Heart left ventricle (tissue), 16 donors: ENCODE measurements at regions of chr5 and their contacts with region 1.

Region 1: DNA sequence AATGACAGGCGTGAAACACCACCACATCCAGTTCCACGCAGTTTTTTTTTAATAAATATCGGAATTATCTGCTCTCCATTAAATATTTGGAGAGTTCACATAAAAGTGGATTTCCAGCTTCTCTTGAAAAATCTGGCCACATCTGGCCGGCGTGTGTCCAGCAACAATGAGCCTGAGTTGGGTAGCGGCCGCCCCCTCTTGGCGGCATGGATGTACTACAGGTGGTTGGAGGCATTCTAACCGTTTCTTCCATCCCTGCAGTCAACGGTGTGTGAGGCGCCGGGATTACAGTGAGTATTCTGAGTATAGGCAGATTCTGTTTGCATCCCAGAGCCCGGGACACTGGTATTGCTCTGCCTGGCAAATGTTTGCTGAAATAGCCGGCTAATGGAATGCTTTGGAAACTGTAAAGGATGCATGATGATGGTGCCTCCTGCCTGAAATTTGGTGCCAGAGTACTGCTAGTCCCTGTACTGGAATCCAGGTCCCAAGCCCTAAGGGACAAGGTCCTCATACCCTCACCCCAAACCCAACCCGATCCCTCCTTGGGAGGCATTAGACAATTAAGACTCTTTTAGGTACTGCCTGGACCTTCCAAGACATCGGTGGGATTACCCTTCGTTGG is 13.6 kb upstream of the GM2A start:
- DNase-seq: peak; percentile 82 to 91 (median 86)
- ATAC-seq: peak; percentile 46 to 74 (median 62)
- H3K4me3 ChIP-seq: peak overlapping the region in 10 of 12 donors; percentile 19 to 46 (median 30)
- H3K27ac ChIP-seq: peak overlapping the region; percentile 72 to 90 (median 86)
- H3K4me1 ChIP-seq: peaks cover 3 to 43% (median 23%) of the 10 kb centered on the region in 12 donors
- H3K27me3 ChIP-seq: no peaks in the 10 kb centered on the region
- CTCF ChIP-seq: peak; percentile 67 to 96 (median 94)
- POLR2A ChIP-seq: no peak

Region 2: DNA sequence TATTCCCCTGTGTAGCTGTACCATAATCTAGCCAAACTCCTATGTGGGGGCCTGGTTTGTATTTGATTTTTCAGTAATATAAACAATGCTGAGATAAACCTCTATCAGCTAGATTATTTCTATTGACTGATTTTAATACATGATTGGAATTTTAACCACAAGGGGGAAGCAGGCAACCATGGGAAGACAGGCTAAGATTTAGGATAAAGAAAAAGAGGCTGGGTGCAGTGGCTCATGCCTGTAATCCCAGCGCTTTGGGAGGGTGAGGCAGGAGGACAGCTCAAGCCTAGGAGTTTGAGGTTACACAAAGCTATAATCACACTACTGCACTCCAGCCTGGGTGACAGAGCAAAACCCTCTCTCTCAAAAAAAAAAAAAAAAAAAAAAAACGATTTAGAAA is 237.1 kb before region 1 on chr5:
- intact Hi-C with region 1: loop called in 3 of 10 experiments (anchors 5 to 10 kb)
- DNase-seq: no peak
- ATAC-seq: peak in 2 of 4 donors; percentile 28 to 35
- H3K4me3 ChIP-seq: no peak overlapping the region
- H3K27ac ChIP-seq: no peak overlapping the region
- H3K4me1 ChIP-seq: peaks cover 0 to 46% (median 32%) of the 10 kb centered on the region in 12 donors
- H3K27me3 ChIP-seq: no peaks in the 10 kb centered on the region
- CTCF ChIP-seq: peak; percentile 46 to 73 (median 64)
- POLR2A ChIP-seq: no peak

Region 3: GRCh38 chr5:151063142-151063949 is 176.0 kb before region 1 on chr5:
- intact Hi-C with region 1: loop called in 1 of 10 experiments (anchors 5 kb)
- DNase-seq: peak in 4 of 5 donors; percentile 55 to 73 (median 57)
- ATAC-seq: peak; percentile 75 to 79 (median 76)
- H3K4me3 ChIP-seq: peak overlapping the region in 1 of 12 donors; percentile 12
- H3K27ac ChIP-seq: peak overlapping the region; percentile 60 to 97 (median 86)
- H3K4me1 ChIP-seq: peaks cover 15 to 99% (median 82%) of the 10 kb centered on the region in 12 donors
- H3K27me3 ChIP-seq: no peaks in the 10 kb centered on the region
- CTCF ChIP-seq: peak in 1 of 12 donors; percentile 12
- POLR2A ChIP-seq: no peak

Region 4: DNA sequence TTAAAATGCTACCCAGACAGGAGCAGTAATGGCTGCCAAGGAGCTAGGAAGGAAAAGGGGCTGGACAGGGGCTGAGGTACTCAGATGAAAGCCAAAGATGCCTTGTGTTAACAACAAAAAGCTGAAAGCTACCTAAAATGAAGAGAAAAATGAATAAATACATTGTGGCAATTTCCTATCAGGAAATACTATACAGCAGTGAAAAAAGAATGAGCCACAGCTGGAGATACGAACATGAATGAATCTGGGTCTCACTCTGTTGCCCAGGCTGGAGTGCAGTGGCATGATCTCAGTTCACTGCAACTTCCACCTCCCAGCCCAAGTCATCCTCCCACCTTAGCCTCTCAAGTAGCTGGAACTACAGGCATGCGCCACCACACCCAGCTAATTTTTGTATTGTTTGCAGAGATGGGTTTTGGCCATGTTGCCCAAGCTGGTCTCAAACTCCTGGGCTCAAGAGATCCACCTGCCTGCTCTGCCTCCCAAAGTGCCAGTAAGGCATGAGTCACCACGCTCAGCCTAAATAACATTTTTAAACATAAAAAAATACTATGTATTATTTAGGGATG is 164.7 kb before region 1 on chr5:
- intact Hi-C with region 1: no loop called
- DNase-seq: peak in 1 of 5 donors; percentile 15
- ATAC-seq: no peak
- H3K4me3 ChIP-seq: no peak overlapping the region
- H3K27ac ChIP-seq: no peak overlapping the region
- H3K4me1 ChIP-seq: peaks cover 12 to 90% (median 64%) of the 10 kb centered on the region in 12 donors
- H3K27me3 ChIP-seq: no peaks in the 10 kb centered on the region
- CTCF ChIP-seq: no peak
- POLR2A ChIP-seq: no peak

Region 5: GRCh38 chr5:151157426-151158286 is 81.7 kb before region 1 on chr5 and contains the start of gene ANXA6:
- intact Hi-C with region 1: loop called in 2 of 10 experiments (anchors 5 kb)
- DNase-seq: peak; percentile 91 to 95 (median 92)
- ATAC-seq: peak; percentile 97 to 99 (median 98)
- H3K4me3 ChIP-seq: peak within 1 kb of the TSS; percentile 58 to 97 (median 86)
- H3K27ac ChIP-seq: peak within 1 kb of the TSS; percentile 70 to 94 (median 90)
- H3K4me1 ChIP-seq: peaks cover 6 to 54% (median 46%) of the 10 kb centered on the region in 12 donors
- H3K27me3 ChIP-seq: no peaks in the 10 kb centered on the region
- CTCF ChIP-seq: no peak
- POLR2A ChIP-seq: peak in 1 of 2 donors; percentile 74
- total RNA-seq, gene ANXA6: 179 to 287 (median 220) TPM

Region 6: DNA sequence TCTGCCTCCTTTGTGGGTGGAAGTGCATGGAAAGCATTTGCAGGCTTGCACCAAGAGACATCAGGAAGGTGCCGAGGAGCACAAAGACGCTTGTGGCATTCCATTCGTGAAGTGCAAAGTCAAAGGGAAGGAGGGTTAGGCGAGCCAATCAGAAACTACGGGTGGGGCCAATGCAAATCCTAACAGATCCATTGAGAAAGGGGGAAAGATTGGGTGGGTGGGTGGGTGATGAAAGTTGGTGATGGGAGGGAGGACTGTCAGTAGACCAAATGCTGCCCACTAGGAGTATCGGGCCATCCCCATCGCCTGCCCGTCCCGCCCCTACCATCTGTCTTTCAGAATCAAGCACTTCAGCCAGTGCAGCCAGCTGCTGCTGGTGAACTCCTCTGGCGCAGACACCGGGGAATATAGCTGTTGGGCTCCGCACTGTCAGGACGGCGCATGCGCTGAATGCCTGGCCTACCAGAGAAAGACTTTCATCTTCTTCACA is 64.7 kb before region 1 on chr5:
- intact Hi-C with region 1: loop called in 4 of 10 experiments (anchors 5 kb)
- DNase-seq: peak in 2 of 5 donors; percentile 56 to 64
- ATAC-seq: peak in 3 of 4 donors; percentile 27 to 61 (median 54)
- H3K4me3 ChIP-seq: peak overlapping the region in 3 of 12 donors; percentile 5 to 26 (median 17)
- H3K27ac ChIP-seq: peak overlapping the region in 2 of 12 donors; percentile 2 to 38
- H3K4me1 ChIP-seq: peaks cover 0 to 9% (median 0%) of the 10 kb centered on the region in 12 donors
- H3K27me3 ChIP-seq: no peaks in the 10 kb centered on the region
- CTCF ChIP-seq: no peak
- POLR2A ChIP-seq: no peak

Region 7: GRCh38 chr5:151745071-151745705 is 505.8 kb after region 1 on chr5:
- intact Hi-C with region 1: no loop called
- DNase-seq: peak in 4 of 5 donors; percentile 26 to 68 (median 52)
- ATAC-seq: peak; percentile 20 to 77 (median 64)
- H3K4me3 ChIP-seq: no peak overlapping the region
- H3K27ac ChIP-seq: peak overlapping the region in 11 of 12 donors; percentile 18 to 62 (median 51)
- H3K4me1 ChIP-seq: peaks cover 0 to 75% (median 30%) of the 10 kb centered on the region in 12 donors
- H3K27me3 ChIP-seq: no peaks in the 10 kb centered on the region
- CTCF ChIP-seq: no peak
- POLR2A ChIP-seq: no peak